K562 (cell line): ENCODE measurements at regions of chr2 and their contacts with region 1.

Region 1: GRCh38 chr2:36663851-36664695 is 32.4 kb upstream of the VIT start:
- DNase-seq: peak; percentile 32 to 68 (median 40)
- ATAC-seq: peak; percentile 96
- H3K4me3 ChIP-seq: no peak overlapping the region
- H3K27ac ChIP-seq: no peak overlapping the region
- H3K4me1 ChIP-seq: no peaks in the 10 kb centered on the region
- H3K27me3 ChIP-seq: peaks cover 0 to 2% of the 10 kb centered on the region in 2 experiments; a peak in 2 of 5 replicates
- CTCF ChIP-seq: peak; percentile 50 to 78 (median 66); a peak in 5 of 6 replicates
- EP300 ChIP-seq: no peak
- POLR2A ChIP-seq: no peak
- RAD21 ChIP-seq: peak; percentile 86 to 87

Region 2: GRCh38 chr2:35255826-35256225 is 1408.2 kb before region 1 on chr2:
- CTCF ChIA-PET with region 1: no interaction called
- POLR2A ChIA-PET with region 1: no interaction called
- in situ Hi-C with region 1: no loop called
- intact Hi-C with region 1: no loop called
- DNase-seq: no peak
- ATAC-seq: no peak
- H3K4me3 ChIP-seq: no peak overlapping the region
- H3K27ac ChIP-seq: no peak overlapping the region
- H3K4me1 ChIP-seq: no peaks in the 10 kb centered on the region
- H3K27me3 ChIP-seq: no peaks in the 10 kb centered on the region
- CTCF ChIP-seq: no peak
- EP300 ChIP-seq: no peak
- POLR2A ChIP-seq: no peak
- RAD21 ChIP-seq: no peak

Region 3: GRCh38 chr2:36416370-36417165 is 247.5 kb before region 1 on chr2:
- CTCF ChIA-PET with region 1: interaction called, 3 read pairs
- POLR2A ChIA-PET with region 1: no interaction called
- in situ Hi-C with region 1: no loop called
- intact Hi-C with region 1: loop called (anchors 5 kb)
- DNase-seq: no peak
- ATAC-seq: no peak
- H3K4me3 ChIP-seq: no peak overlapping the region
- H3K27ac ChIP-seq: no peak overlapping the region
- H3K4me1 ChIP-seq: no peaks in the 10 kb centered on the region
- H3K27me3 ChIP-seq: no peaks in the 10 kb centered on the region
- CTCF ChIP-seq: no peak
- EP300 ChIP-seq: no peak
- POLR2A ChIP-seq: no peak
- RAD21 ChIP-seq: no peak

Region 4: DNA sequence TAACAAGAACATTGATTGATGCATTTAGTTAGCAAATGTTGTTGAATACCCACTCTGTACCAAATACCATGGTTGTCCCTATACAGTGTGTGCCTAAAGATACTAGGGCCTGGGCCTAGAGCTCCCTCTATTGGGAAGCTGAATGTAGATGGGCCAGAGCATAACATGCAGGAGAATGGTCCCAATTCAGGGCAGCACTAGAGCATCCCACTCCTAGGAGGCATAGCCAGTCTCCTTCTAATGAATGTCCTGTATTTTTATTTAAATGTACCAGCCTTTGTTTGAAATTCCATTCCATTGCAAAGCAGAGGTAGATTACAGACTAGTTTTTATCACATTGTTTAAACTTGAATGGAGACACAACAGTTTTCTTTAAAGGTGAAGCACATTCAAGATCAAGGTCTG is 156.7 kb before region 1 on chr2:
- CTCF ChIA-PET with region 1: no interaction called
- POLR2A ChIA-PET with region 1: no interaction called
- in situ Hi-C with region 1: no loop called
- intact Hi-C with region 1: loop called (anchors 5 kb)
- DNase-seq: peak; percentile 13 to 56 (median 33)
- ATAC-seq: peak; percentile 96
- H3K4me3 ChIP-seq: no peak overlapping the region
- H3K27ac ChIP-seq: no peak overlapping the region
- H3K4me1 ChIP-seq: peaks cover 0 to 9% of the 10 kb centered on the region in 2 experiments; a peak in 2 of 5 replicates
- H3K27me3 ChIP-seq: no peaks in the 10 kb centered on the region
- CTCF ChIP-seq: peak; percentile 65 to 76 (median 73)
- EP300 ChIP-seq: no peak
- POLR2A ChIP-seq: no peak
- RAD21 ChIP-seq: peak; percentile 72 to 81

Region 5: DNA sequence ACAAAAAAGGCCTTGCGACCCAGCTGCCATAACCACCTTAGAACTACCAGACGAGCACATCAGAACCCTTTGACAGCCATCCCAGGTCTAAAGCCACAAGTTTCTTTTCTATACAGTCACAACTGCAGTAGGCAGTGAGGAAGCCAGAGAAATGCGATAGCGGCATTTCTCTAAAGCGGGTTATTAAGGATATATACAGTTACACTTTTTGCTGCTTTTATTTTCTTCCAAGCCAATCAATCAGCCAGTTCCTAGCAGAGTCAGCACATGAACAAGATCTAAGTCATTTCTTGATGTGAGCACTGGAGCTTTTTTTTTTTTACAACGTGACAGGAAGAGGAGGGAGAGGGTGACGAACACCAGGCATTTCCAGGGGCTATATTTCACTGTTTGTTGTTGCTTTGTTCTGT is 114.9 kb before region 1 on chr2:
- CTCF ChIA-PET with region 1: no interaction called
- POLR2A ChIA-PET with region 1: no interaction called
- in situ Hi-C with region 1: no loop called
- intact Hi-C with region 1: no loop called
- DNase-seq: no peak
- ATAC-seq: no peak
- H3K4me3 ChIP-seq: no peak overlapping the region
- H3K27ac ChIP-seq: no peak overlapping the region
- H3K4me1 ChIP-seq: no peaks in the 10 kb centered on the region
- H3K27me3 ChIP-seq: no peaks in the 10 kb centered on the region
- CTCF ChIP-seq: no peak
- EP300 ChIP-seq: no peak
- POLR2A ChIP-seq: no peak
- RAD21 ChIP-seq: no peak